ENCODE measurements at regions of chr6 and their contacts with region 1.

Region 1: DNA sequence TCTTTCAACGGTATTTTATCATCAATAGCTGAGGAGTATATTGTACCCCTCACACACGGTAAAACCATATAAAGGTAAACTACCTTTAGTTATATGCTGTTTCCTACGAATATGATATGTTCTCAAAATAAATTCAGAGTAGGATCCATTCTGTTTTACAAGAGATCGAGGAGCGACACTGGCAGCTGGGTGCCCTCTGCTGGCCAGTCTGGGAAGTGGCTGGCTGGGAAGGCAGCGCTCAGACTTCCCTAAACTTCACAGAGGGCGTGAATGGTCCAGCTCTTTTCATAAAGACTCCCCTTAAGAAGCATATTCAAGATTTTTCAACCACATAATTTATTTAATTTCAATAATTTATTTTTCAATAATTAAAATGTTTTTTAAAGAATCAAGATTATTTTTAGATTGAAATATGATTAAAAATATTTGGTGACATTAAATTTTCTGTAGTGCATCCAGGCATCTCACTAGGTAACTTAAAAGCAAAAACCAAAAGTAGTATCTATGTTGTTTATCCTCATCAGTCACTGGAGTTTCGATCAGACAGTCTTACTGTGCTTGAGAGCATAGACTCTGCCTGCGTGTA is 187.5 kb upstream of the PDE10A start:
- DNase-seq: peak; percentile 79
- H3K4me3 ChIP-seq: peak overlapping the region; percentile 49
- H3K27ac ChIP-seq: no peak overlapping the region
- H3K4me1 ChIP-seq: peaks cover 37% of the 10 kb centered on the region
- H3K27me3 ChIP-seq: peaks cover 44% of the 10 kb centered on the region
- CTCF ChIP-seq: peak; percentile 100

Region 2: GRCh38 chr6:165439928-165440554 is 410.5 kb before region 1 on chr6:
- intact Hi-C with region 1: loop called (anchors 5 kb)
- DNase-seq: no peak
- H3K4me3 ChIP-seq: no peak overlapping the region
- H3K27ac ChIP-seq: no peak overlapping the region
- H3K4me1 ChIP-seq: no peaks in the 10 kb centered on the region
- H3K27me3 ChIP-seq: no peaks in the 10 kb centered on the region
- CTCF ChIP-seq: peak; percentile 74

Region 3: GRCh38 chr6:165662749-165663282 is 187.7 kb before region 1 on chr6 and contains the start of gene PDE10A:
- intact Hi-C with region 1: loop called (anchors 10 kb)
- DNase-seq: peak; percentile 84
- H3K4me3 ChIP-seq: peak within 1 kb of the TSS; percentile 93
- H3K27ac ChIP-seq: peak within 1 kb of the TSS; percentile 97
- H3K4me1 ChIP-seq: peaks cover 56% of the 10 kb centered on the region
- H3K27me3 ChIP-seq: peaks cover 39% of the 10 kb centered on the region
- CTCF ChIP-seq: no peak
- total RNA-seq, gene PDE10A: 12.2 TPM

Region 4: GRCh38 chr6:165729307-165729936 is 121.1 kb before region 1 on chr6:
- intact Hi-C with region 1: loop called (anchors 2 kb)
- DNase-seq: no peak
- H3K4me3 ChIP-seq: no peak overlapping the region
- H3K27ac ChIP-seq: no peak overlapping the region
- H3K4me1 ChIP-seq: no peaks in the 10 kb centered on the region
- H3K27me3 ChIP-seq: no peaks in the 10 kb centered on the region
- CTCF ChIP-seq: peak; percentile 88

Region 5: GRCh38 chr6:165804331-165805066 is 46.0 kb before region 1 on chr6:
- intact Hi-C with region 1: no loop called
- DNase-seq: peak; percentile 41
- H3K4me3 ChIP-seq: peak overlapping the region; percentile 65
- H3K27ac ChIP-seq: peak overlapping the region; percentile 71
- H3K4me1 ChIP-seq: peaks cover 46% of the 10 kb centered on the region
- H3K27me3 ChIP-seq: peaks cover 17% of the 10 kb centered on the region
- CTCF ChIP-seq: no peak

Region 6: GRCh38 chr6:165899611-165900010 is 49.1 kb after region 1 on chr6:
- intact Hi-C with region 1: no loop called
- DNase-seq: no peak
- H3K4me3 ChIP-seq: no peak overlapping the region
- H3K27ac ChIP-seq: no peak overlapping the region
- H3K4me1 ChIP-seq: no peaks in the 10 kb centered on the region
- H3K27me3 ChIP-seq: peaks cover 42% of the 10 kb centered on the region
- CTCF ChIP-seq: no peak